Activated CD4-positive, alpha-beta memory T cell treated with anti-CD3 and anti-CD28 coated beads for 36 hours (primary cell): ENCODE measurements at regions of chr2 and their contacts with region 1.

Region 1: GRCh38 chr2:160406591-160407392 is 86.8 kb downstream of the RBMS1 start:
- DNase-seq: peak; percentile 78
- H3K4me3 Mint-ChIP-seq: peak overlapping the region; percentile 82
- H3K27ac Mint-ChIP-seq: peak overlapping the region; percentile 94
- H3K4me1 Mint-ChIP-seq: peaks cover 80% of the 10 kb centered on the region
- H3K27me3 Mint-ChIP-seq: no peaks in the 10 kb centered on the region

Region 2: DNA sequence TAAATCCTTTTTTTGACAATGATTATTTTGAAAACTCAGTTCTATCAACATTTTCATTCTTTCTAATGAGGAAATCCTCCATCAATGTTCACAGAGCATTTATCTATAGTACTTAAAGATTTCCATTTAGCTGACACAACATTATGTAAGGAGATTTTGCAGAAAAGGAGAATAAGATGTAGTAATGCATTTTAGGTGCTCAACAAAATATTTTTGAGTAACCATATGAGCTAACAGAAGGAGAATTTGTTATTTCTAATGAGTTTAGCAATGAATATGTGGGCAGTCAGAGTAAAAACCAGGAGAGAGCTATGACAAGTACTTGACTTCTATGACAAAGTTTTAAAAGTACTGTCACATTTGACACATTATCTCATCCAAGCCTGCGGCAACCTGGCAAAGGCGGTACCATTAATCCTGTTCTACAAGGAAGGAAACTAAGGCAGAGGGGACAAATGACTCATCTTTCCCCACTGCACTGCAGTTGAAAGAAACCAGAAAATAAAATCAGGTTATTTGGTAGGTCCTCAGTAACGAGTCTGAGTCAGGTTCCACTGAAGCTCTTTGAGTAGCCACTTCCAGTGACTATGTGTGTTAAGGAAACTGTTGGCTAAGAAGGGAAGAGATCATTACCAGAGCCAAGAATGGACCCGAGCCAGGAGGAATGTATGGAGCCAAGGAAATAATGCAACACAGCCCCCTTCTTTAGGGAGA is 72.6 kb before region 1 on chr2:
- CTCF ChIA-PET with region 1: interaction called, 4 read pairs
- POLR2A ChIA-PET with region 1: interaction called, 4 read pairs
- intact Hi-C with region 1: loop called (anchors 1 kb)
- DNase-seq: peak; percentile 63
- H3K4me3 Mint-ChIP-seq: no peak overlapping the region
- H3K27ac Mint-ChIP-seq: peak overlapping the region; percentile 55
- H3K4me1 Mint-ChIP-seq: peaks cover 80% of the 10 kb centered on the region
- H3K27me3 Mint-ChIP-seq: no peaks in the 10 kb centered on the region

Region 3: GRCh38 chr2:160394153-160394552 is 12.6 kb before region 1 on chr2:
- CTCF ChIA-PET with region 1: interaction called, 3 read pairs
- POLR2A ChIA-PET with region 1: interaction called, 3 read pairs
- intact Hi-C with region 1: loop called (anchors 1 kb)
- DNase-seq: no peak
- H3K4me3 Mint-ChIP-seq: peak overlapping the region; percentile 25
- H3K27ac Mint-ChIP-seq: peak overlapping the region; percentile 64
- H3K4me1 Mint-ChIP-seq: peaks cover 58% of the 10 kb centered on the region
- H3K27me3 Mint-ChIP-seq: no peaks in the 10 kb centered on the region

Region 4: DNA sequence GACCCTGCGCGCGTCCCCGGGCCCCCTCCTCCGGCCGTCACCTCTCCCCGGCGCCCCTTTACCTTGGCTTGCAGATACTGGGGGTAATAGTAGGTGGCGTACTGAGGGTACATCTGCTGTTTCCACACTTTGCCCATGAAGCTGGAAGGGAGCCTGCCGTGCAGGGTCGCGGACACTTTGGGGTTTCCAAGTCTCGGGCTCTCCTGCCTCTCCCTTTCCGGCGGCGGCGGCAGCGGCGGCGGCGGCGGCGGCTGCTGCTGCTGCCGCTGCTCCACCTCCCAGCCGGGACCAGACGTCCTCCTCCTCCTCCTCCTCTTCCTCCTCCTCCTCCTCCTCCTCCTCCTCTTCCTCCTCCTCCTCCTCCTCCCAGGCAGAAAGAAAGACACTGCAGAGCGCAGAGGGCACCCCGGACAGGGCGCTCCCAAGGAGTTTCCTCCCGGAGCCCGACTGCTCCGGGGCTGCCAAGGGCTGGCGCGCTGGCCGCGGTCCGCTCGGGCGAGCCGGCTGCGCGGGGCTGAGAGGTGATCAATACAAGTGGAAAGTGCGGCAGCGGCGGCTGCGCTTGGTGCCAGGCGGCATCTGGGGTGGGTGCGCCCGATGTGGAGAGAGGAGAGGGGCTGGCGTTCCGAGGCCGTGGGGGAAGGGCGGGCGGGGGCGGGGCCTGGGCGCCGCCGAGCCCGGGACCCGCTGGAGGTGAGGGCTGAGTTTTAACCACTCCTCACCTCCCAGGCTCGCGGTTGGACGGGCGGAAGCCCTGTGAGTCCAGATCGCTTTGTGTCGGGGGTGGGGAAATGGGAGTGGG is 86.6 kb after region 1 on chr2 and contains the start of gene RBMS1:
- CTCF ChIA-PET with region 1: no interaction called
- POLR2A ChIA-PET with region 1: no interaction called
- intact Hi-C with region 1: loop called (anchors 2 kb)
- DNase-seq: peak; percentile 59
- H3K4me3 Mint-ChIP-seq: peak within 1 kb of the TSS; percentile 95
- H3K27ac Mint-ChIP-seq: peak within 1 kb of the TSS; percentile 93
- H3K4me1 Mint-ChIP-seq: peaks cover 36% of the 10 kb centered on the region
- H3K27me3 Mint-ChIP-seq: no peaks in the 10 kb centered on the region
- total RNA-seq, gene RBMS1: 37.9 to 40.0 TPM

Region 5: GRCh38 chr2:160994141-160995002 is 587.6 kb after region 1 on chr2:
- CTCF ChIA-PET with region 1: no interaction called
- POLR2A ChIA-PET with region 1: interaction called, 4 read pairs
- intact Hi-C with region 1: loop called (anchors 5 kb)
- DNase-seq: peak; percentile 71
- H3K4me3 Mint-ChIP-seq: no peak overlapping the region
- H3K27ac Mint-ChIP-seq: no peak overlapping the region
- H3K4me1 Mint-ChIP-seq: peaks cover 6% of the 10 kb centered on the region
- H3K27me3 Mint-ChIP-seq: no peaks in the 10 kb centered on the region

Region 6: DNA sequence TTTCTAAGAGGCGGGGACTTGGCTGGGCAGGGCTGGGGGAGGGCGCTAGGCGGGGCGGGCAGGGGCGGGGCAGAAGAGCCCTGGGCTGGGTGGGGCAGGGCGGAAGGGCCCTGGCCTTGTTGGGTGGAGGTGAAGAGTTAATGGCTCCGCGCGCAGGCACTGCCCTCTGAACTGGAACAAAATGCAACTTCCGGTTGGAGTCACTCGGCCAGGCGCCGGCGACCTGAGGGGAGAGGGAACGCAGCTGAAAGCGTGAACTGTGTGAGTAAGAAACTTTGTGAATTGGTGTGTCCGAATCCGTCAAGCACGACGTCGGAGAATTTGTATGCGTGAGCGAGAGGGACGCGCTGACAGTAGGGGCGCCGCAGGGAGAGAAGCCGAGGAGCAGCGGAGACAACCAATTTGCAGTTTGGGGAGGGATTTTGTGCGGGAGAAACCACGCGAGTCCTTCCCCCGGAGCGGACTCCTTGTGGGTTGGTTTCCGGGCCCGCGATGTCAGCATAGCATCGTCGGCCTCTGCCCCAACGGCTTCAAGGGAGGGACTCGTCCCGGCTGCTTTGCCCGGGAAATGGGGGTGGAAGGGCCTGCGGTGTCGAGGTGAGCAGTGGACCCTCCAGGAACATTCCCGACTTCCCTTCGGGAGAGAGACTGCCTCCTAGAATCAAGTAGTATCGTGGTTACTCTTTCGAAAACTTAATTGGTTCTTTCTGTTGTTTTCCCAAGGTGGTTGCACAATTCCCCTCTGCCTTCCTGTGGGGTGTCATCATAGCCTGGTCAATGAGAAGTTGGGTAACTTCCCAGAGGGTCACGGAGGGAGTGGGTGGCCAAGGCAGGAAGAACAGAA is 753.7 kb after region 1 on chr2 and contains the start of gene TANK:
- CTCF ChIA-PET with region 1: no interaction called
- POLR2A ChIA-PET with region 1: no interaction called
- intact Hi-C with region 1: loop called (anchors 2 kb)
- DNase-seq: peak; percentile 96
- H3K4me3 Mint-ChIP-seq: peak within 1 kb of the TSS; percentile 96
- H3K27ac Mint-ChIP-seq: peak within 1 kb of the TSS; percentile 98
- H3K4me1 Mint-ChIP-seq: peaks cover 55% of the 10 kb centered on the region
- H3K27me3 Mint-ChIP-seq: no peaks in the 10 kb centered on the region
- total RNA-seq, gene TANK: 71.4 to 74.1 TPM